Calu3 (cell line): ENCODE measurements at regions of chr17 and their contacts with region 1.

Region 1: GRCh38 chr17:39738931-39739884 is 1.5 kb downstream of the GRB7 start:
- DNase-seq: peak; percentile 100
- H3K4me3 Mint-ChIP-seq: peak overlapping the region; percentile 77
- H3K27ac Mint-ChIP-seq: peak overlapping the region; percentile 21
- H3K4me1 Mint-ChIP-seq: peaks cover 54% of the 10 kb centered on the region
- H3K27me3 Mint-ChIP-seq: no peaks in the 10 kb centered on the region
- CTCF ChIP-seq: no peak

Region 2: GRCh38 chr17:39352511-39352910 is 386.7 kb before region 1 on chr17:
- CTCF ChIA-PET with region 1: no interaction called
- intact Hi-C with region 1: no loop called
- DNase-seq: no peak
- H3K4me3 Mint-ChIP-seq: no peak overlapping the region
- H3K27ac Mint-ChIP-seq: peak overlapping the region; percentile 96
- H3K4me1 Mint-ChIP-seq: peaks cover 41% of the 10 kb centered on the region
- H3K27me3 Mint-ChIP-seq: no peaks in the 10 kb centered on the region
- CTCF ChIP-seq: peak; percentile 59

Region 3: DNA sequence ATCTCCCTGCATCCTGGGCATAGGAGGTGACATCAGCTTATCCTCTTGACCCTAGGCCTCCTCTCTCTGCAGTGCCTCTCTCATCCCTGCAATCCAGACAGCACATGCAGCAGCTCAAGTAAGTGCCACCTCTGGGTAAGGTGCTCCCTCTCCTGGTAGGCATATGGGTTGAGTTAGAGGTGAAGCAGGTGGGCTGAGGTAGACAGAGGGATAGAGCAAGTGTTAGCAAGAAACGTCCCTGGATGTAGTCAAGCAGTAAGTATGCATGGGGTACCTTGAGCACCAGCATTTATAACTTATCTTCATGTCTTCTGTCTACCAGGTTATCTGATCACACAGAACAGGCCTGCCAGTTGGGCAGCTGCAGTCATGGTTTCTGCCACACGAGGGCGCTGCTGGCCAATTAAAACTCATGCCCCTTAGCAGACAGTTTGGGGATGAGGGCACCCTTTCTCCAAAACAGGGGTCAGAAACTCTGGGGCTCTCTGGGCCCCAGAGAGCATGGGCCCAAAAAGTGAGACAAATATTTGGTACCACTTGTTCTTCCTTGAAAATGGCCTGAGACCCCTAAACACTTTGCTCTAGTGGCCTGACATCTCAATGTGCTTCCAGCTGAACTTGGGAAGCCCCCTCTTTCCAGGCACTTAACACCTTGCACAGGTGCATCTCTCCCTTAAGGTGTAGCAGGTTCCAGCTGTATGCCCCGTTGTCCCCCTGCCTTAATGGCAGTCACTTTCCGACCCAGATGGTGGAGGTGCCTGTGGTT is 191.3 kb before region 1 on chr17:
- CTCF ChIA-PET with region 1: interaction called, 10 read pairs
- intact Hi-C with region 1: no loop called
- DNase-seq: peak; percentile 96
- H3K4me3 Mint-ChIP-seq: no peak overlapping the region
- H3K27ac Mint-ChIP-seq: no peak overlapping the region
- H3K4me1 Mint-ChIP-seq: peaks cover 12% of the 10 kb centered on the region
- H3K27me3 Mint-ChIP-seq: no peaks in the 10 kb centered on the region
- CTCF ChIP-seq: peak; percentile 100

Region 4: DNA sequence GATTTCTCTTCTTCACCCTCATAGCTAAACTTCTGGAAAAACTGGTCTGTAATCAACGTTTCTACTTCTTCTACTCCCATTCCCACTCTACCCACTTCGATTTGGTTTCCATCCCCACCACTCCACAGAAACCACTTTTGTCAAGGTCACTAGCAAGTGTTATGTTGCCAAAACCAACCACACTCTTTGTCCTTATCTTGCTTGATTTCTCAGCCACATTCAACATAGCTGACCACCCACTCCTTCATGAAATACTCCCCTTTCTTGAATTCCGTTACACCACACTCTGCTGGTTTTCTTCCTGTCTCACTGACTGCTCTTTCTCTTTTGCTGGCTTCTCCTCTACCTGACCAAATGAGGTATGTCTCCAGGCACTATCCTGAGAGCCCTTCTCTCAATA is 113.0 kb after region 1 on chr17:
- CTCF ChIA-PET with region 1: interaction called, 217 read pairs
- intact Hi-C with region 1: no loop called
- DNase-seq: peak; percentile 59
- H3K4me3 Mint-ChIP-seq: no peak overlapping the region
- H3K27ac Mint-ChIP-seq: no peak overlapping the region
- H3K4me1 Mint-ChIP-seq: peaks cover 10% of the 10 kb centered on the region
- H3K27me3 Mint-ChIP-seq: no peaks in the 10 kb centered on the region
- CTCF ChIP-seq: no peak

Region 5: DNA sequence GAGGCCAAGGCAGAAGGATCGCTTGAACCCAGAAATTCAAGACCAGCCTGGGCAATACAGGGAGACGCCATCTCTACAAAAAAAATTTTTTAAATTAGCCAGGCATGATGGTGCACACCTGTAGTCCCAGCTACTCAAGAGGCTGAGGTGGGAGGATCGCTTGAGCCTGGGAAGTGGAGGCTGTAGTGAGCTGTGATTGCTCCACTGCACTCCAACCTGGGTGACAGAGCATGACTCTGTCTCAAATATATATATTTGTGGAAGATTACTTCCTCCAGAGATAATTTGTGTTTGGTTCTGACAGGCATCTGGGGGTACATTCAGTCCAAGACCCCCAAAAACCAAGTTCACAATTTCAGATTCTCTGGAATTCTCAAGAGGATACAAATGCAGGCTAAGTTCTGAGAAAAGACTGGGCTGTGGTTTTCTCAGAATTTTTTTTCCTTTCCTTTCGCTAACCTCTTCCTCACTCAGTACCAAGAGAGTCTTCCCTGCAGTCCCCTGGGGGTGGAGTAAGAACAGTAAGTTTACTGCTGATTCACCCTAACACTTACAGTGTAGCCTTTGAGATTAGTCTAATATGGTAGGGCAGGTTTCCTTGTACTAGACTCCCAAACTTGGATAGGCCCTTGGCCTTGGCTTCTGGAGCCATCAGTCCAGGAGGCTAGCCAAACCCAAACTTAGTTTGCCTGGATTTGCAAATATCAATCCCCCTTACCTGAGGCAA is 164.1 kb after region 1 on chr17:
- CTCF ChIA-PET with region 1: interaction called, 679 read pairs
- intact Hi-C with region 1: no loop called
- DNase-seq: peak; percentile 66
- H3K4me3 Mint-ChIP-seq: no peak overlapping the region
- H3K27ac Mint-ChIP-seq: no peak overlapping the region
- H3K4me1 Mint-ChIP-seq: peaks cover 12% of the 10 kb centered on the region
- H3K27me3 Mint-ChIP-seq: no peaks in the 10 kb centered on the region
- CTCF ChIP-seq: no peak

Region 6: DNA sequence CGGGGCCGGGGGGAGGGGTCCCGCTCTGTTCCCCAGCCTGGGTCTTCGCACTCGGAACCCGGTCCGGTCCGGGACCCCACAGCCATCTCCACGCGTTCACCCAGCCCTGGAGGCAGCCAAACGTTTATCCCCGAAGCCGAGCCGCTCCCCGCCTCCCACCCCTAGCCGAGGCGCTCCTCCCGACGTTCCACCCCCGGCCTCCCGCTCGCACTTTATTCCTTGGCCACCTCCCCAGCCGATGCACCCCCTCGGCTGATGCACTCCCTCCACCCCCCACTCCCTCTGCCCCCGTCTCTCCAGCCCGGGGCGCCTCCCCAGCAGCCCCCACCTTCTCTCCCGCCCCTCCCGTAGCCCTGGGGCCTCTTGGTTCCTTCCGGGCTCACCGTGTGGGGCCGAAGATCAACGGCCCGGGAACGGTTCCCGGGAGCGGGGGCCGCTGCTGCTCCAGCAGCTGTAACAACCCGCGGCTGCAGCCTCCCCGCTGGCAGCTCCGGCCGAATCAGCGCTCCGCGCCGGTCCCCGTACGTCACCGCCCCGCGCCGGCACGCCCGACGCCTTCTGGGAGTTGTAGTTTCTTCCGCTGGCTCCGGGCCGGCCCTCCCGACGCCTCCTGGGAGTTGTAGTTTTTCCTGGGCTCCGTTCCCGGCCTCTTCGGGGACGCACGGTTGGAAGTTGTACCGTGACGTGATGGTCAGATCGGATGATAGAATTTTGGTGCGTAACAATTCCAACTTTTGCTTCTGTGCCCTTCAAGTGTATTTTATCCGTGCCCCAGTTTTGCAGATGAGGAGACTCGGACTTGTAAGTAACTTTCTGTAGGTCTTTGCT is 188.1 kb after region 1 on chr17 and contains the starts of genes LRRC3C and ORMDL3:
- CTCF ChIA-PET with region 1: interaction called, 275 read pairs
- intact Hi-C with region 1: loop called (anchors 1 kb)
- DNase-seq: no peak
- H3K4me3 Mint-ChIP-seq: peak within 1 kb of the TSS; percentile 74
- H3K27ac Mint-ChIP-seq: peak within 1 kb of the TSS; percentile 66
- H3K4me1 Mint-ChIP-seq: peaks cover 60% of the 10 kb centered on the region
- H3K27me3 Mint-ChIP-seq: no peaks in the 10 kb centered on the region
- CTCF ChIP-seq: no peak
- total RNA-seq, gene LRRC3C: not detected in 2 replicates
- total RNA-seq, gene ORMDL3: 1,738 and 1,968 TPM in 2 replicates

Region 7: DNA sequence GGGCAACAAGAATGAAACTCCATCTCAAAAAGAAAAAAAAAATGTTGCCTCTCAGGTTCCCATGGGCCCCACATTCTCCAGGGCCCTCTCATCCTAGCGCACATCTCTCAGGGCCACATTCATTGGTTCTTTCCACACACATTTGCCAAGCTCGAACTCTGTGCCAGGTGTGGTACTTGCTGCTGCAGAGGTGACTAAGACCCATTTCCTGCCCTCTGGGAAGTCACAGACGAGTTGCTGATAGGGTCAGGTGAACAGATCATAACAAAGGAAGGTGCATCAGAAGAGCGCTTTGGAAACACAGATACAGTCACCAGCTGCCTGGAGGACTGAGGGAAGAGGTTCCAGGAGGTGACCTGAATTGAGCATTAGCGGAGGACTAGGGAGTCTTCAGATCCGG is 224.6 kb after region 1 on chr17:
- CTCF ChIA-PET with region 1: interaction called, 1,335 read pairs
- intact Hi-C with region 1: loop called (anchors 1 kb)
- DNase-seq: peak; percentile 94
- H3K4me3 Mint-ChIP-seq: no peak overlapping the region
- H3K27ac Mint-ChIP-seq: peak overlapping the region; percentile 0
- H3K4me1 Mint-ChIP-seq: peaks cover 45% of the 10 kb centered on the region
- H3K27me3 Mint-ChIP-seq: peaks cover 32% of the 10 kb centered on the region
- CTCF ChIP-seq: no peak